ENCODE measurements at regions of chr2 and their contacts with region 1.

Region 1: DNA sequence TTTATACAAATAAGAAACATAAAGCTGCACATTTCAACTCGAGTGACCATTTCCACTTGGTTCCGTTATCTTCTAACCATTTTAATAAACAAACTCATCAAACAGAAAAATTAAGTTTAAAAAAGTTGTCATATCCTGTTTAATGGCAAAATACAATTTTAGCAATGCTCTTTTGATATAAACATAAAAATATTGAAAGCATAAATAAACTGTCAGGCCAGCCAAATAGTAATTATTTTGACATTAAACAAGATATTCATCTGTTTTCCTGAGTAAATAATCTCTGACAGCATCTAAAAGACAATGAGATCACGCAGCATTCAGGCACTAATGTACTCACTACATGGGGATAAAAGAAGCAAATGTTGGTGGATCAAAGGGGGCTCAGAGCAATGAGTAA is 145.3 kb upstream of the ATP5MC3 start:
- DNase-seq: no peak
- H3K4me3 Mint-ChIP-seq: no peak overlapping the region
- H3K27ac Mint-ChIP-seq: no peak overlapping the region
- H3K4me1 Mint-ChIP-seq: no peaks in the 10 kb centered on the region
- H3K27me3 Mint-ChIP-seq: peaks cover 7% of the 10 kb centered on the region

Region 2: DNA sequence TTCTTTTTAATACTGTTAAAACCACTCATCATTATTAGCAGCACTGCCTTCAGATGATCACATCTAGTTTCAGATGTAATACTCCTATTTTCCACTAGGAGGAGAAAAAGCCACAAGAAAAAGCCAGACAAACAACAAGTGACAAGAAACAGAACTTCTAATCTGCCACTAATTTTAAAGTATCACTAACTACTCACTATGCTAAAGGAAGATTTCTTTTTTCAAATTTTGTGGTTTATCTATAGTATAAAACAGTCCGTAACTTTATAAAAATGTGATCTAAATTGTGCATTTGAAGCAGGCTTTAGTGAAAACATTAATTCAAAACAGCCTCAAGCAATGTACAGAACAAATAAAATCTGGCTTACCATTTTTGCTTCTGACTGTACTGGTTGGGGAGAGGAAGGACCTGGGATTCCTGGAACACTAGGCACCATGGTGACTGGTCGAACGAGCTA is 215.6 kb before region 1 on chr2:
- CTCF ChIA-PET with region 1: no interaction called
- intact Hi-C with region 1: loop called (anchors 1 kb)
- DNase-seq: no peak
- H3K4me3 Mint-ChIP-seq: no peak overlapping the region
- H3K27ac Mint-ChIP-seq: no peak overlapping the region
- H3K4me1 Mint-ChIP-seq: peaks cover 3% of the 10 kb centered on the region
- H3K27me3 Mint-ChIP-seq: no peaks in the 10 kb centered on the region

Region 3: GRCh38 chr2:175203621-175204496 is 122.9 kb before region 1 on chr2:
- CTCF ChIA-PET with region 1: interaction called, 3 read pairs
- intact Hi-C with region 1: loop called (anchors 2 kb)
- DNase-seq: peak; percentile 67
- H3K4me3 Mint-ChIP-seq: no peak overlapping the region
- H3K27ac Mint-ChIP-seq: no peak overlapping the region
- H3K4me1 Mint-ChIP-seq: peaks cover 2% of the 10 kb centered on the region
- H3K27me3 Mint-ChIP-seq: peaks cover 7% of the 10 kb centered on the region